ENCODE measurements at regions of chr17 and their contacts with region 1.

Region 1: GRCh38 chr17:72187556-72187955 is 66.7 kb downstream of the SOX9 start:
- DNase-seq: peak; percentile 83 to 91 (median 88)
- ATAC-seq: peak; percentile 71 to 76
- H3K4me3 ChIP-seq: no peak overlapping the region
- H3K27ac ChIP-seq: peak overlapping the region; percentile 25
- H3K4me1 ChIP-seq: peaks cover under 1% of the 10 kb centered on the region
- H3K27me3 ChIP-seq: no peaks in the 10 kb centered on the region

Region 2: GRCh38 chr17:72126563-72127486 is 60.7 kb before region 1 on chr17:
- intact Hi-C with region 1: loop called in 3 of 4 experiments (anchors 2 to 5 kb)
- DNase-seq: no peak
- ATAC-seq: peak; percentile 58 to 73
- H3K4me3 ChIP-seq: no peak overlapping the region
- H3K27ac ChIP-seq: peak overlapping the region; percentile 39
- H3K4me1 ChIP-seq: no peaks in the 10 kb centered on the region
- H3K27me3 ChIP-seq: no peaks in the 10 kb centered on the region

Measured in right cardiac atrium (tissue), 5 donors.